ENCODE measurements at regions of chr1 and their contacts with region 1.

Region 1: GRCh38 chr1:229408458-229409037 is 25.3 kb downstream of the ACTA1 start:
- DNase-seq: no peak
- ATAC-seq: peak; percentile 8
- H3K4me3 Mint-ChIP-seq: peak overlapping the region; percentile 6; the same call in 1 of the 2 replicates
- H3K27ac Mint-ChIP-seq: no peak overlapping the region
- H3K4me1 Mint-ChIP-seq: peaks cover 37% of the 10 kb centered on the region
- H3K27me3 Mint-ChIP-seq: peaks cover 88% of the 10 kb centered on the region
- CTCF ChIP-seq: no peak

Region 2: GRCh38 chr1:229430761-229431283 is 22.3 kb after region 1 on chr1:
- CTCF ChIA-PET with region 1: interaction called, 10 read pairs
- POLR2A ChIA-PET with region 1: interaction called, 6 read pairs
- DNase-seq: peak; percentile 89
- ATAC-seq: peak; percentile 71
- H3K4me3 Mint-ChIP-seq: peak overlapping the region; percentile 68
- H3K27ac Mint-ChIP-seq: no peak overlapping the region
- H3K4me1 Mint-ChIP-seq: peaks cover 20% of the 10 kb centered on the region
- H3K27me3 Mint-ChIP-seq: peaks cover 80% of the 10 kb centered on the region
- CTCF ChIP-seq: no peak

Measured in WTC11 (cell line).